IMR-90 (cell line): ENCODE measurements at regions of chr3 and their contacts with region 1.

Region 1: DNA sequence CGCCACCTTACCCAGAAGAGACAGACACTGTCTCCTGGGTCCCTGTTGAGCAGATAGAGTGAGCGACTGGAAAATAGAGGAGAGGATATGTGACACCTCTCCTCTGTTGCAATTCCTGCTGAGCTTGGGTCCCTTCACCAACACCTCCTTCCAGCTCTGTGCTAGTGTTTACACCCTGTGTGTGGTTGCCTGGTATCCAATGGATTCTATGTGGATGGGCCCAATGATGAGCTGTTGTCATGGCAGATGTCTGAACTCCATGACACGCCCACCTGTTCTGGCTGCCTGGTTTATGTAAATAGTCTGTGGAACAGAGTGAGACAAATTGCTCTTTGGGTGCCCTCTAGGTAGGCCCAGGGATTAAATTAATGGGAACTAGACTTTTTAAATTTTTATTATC is 23.7 kb downstream of the RBM5 start:
- DNase-seq: no peak
- ATAC-seq: 0 out of 2 replicates have a peak, but pooled peaks have one; percentile 34
- H3K4me3 ChIP-seq: no peak overlapping the region
- H3K27ac ChIP-seq: no peak overlapping the region
- H3K4me1 ChIP-seq: no peaks in the 10 kb centered on the region
- H3K27me3 ChIP-seq: no peaks in the 10 kb centered on the region
- CTCF ChIP-seq: no peak
- POLR2A ChIP-seq: no peak
- RAD21 ChIP-seq: no peak

Region 2: DNA sequence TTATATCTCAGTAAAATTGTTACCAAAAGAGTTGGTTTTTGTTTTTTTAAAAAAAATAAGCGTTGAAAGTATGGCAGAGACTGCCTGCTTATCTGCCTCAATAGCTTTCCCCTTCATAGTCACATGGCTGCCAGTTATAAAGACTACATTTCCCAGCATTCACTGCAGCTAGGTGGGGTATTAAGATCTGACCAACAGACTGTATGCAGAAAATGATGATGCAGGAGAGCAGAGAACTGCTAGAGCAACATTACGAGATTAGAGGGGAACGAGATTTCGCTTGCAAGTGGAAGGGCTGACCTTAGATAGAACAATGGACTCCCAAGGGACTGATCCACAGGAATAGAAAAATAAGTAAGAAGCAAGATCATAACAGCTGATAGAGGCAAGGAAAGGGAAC is 715.0 kb before region 1 on chr3:
- CTCF ChIA-PET with region 1: no interaction called
- POLR2A ChIA-PET with region 1: no interaction called
- dilution Hi-C with region 1: no loop called
- in situ Hi-C with region 1: no loop called
- intact Hi-C with region 1: no loop called
- DNase-seq: no peak
- ATAC-seq: 0 out of 2 replicates have a peak, but pooled peaks have one; percentile 52
- H3K4me3 ChIP-seq: no peak overlapping the region
- H3K27ac ChIP-seq: no peak overlapping the region
- H3K4me1 ChIP-seq: peaks cover 3% of the 10 kb centered on the region; the same call in 1 of the 2 replicates
- H3K27me3 ChIP-seq: no peaks in the 10 kb centered on the region
- CTCF ChIP-seq: no peak
- POLR2A ChIP-seq: no peak
- RAD21 ChIP-seq: no peak

Region 3: DNA sequence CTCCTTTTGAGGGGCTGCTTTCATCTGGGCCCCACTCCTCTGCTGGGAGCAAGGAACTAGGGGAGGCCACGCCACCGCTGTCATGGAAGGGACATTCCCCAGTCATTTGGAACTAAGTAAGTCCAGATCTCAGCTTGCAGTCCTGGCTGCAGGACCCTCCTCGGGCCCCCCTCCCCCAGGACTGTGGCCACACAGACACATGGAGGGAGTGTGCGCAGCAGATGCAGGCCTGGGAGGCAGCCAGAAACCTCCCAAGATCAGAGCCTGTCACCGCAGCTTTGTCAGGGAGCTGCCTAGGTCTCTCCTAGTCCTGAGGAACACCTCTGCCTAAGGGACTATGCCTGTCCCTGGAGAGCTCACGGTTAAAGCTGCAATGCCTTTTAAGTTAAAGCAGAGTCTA is 35.4 kb after region 1 on chr3:
- CTCF ChIA-PET with region 1: interaction called, 8 read pairs
- POLR2A ChIA-PET with region 1: interaction called, 10 read pairs
- dilution Hi-C with region 1: no loop called
- in situ Hi-C with region 1: no loop called
- intact Hi-C with region 1: no loop called
- DNase-seq: peak; percentile 37
- ATAC-seq: peak; percentile 55
- H3K4me3 ChIP-seq: no peak overlapping the region
- H3K27ac ChIP-seq: no peak overlapping the region
- H3K4me1 ChIP-seq: peaks cover 8% of the 10 kb centered on the region
- H3K27me3 ChIP-seq: no peaks in the 10 kb centered on the region
- CTCF ChIP-seq: no peak
- POLR2A ChIP-seq: no peak
- RAD21 ChIP-seq: no peak

Region 4: DNA sequence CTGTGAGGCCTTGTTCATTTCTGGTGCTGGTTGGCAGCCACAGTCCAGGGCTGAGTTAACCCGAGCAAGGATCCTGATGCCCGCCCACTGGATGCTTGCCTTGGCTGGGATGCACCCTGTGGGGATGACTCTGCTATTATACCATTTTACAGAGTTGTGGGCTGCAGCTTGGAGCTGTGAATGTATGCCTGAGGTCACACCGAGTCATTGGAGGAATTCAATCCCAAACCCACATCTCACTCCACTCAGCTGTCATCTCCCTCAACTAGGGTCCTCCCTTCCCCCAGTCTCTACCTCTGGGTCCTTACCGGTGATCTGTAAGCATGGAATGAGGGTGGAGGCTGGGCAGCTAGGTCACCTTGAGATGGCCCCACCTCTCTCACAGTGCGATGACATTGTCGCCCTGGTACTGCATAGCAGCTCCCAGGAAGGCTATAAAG is 526.6 kb after region 1 on chr3:
- CTCF ChIA-PET with region 1: no interaction called
- POLR2A ChIA-PET with region 1: no interaction called
- dilution Hi-C with region 1: no loop called
- in situ Hi-C with region 1: no loop called
- intact Hi-C with region 1: no loop called
- DNase-seq: peak; percentile 76
- ATAC-seq: peak; percentile 94
- H3K4me3 ChIP-seq: no peak overlapping the region
- H3K27ac ChIP-seq: no peak overlapping the region
- H3K4me1 ChIP-seq: peaks cover 6% of the 10 kb centered on the region
- H3K27me3 ChIP-seq: no peaks in the 10 kb centered on the region
- CTCF ChIP-seq: no peak
- POLR2A ChIP-seq: no peak
- RAD21 ChIP-seq: no peak